WTC11 (cell line): ENCODE measurements at regions of chr2 and their contacts with region 1.

Region 1: DNA sequence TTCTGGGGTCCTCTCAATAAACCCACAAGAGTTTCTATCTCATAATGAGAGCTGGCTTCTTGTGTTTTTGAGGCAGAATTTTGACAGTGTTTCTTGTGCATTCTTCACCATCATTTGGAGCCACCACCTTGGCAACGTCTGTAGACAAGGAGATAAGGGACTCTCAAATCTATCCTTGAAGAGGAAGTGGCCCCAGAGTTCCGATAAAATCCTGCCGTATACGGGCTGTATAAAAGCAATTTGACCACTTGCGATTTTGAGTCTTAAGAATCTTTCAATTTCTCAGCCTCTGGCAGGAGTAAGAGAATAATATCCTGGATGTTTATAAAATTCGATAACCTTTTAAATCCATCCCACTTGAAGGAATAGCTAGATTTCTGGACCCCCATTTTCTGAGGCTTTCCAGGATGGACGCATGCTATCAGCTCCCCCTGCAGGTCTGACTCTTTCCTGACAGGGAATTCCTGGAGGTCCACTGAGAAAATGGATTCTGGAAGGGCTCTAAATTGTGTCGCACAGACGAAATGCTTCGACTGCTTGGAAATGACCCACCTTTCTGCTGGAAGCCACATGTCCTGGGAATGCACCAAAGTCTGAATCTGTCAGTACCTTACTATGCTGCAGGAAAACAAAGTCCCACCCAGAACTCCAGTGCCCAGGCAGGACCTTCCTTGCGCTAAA is 54.1 kb downstream of the E2F6 start:
- DNase-seq: peak; percentile 65
- ATAC-seq: peak; percentile 79
- H3K4me3 Mint-ChIP-seq: no peak overlapping the region
- H3K27ac Mint-ChIP-seq: no peak overlapping the region
- H3K4me1 Mint-ChIP-seq: no peaks in the 10 kb centered on the region
- H3K27me3 Mint-ChIP-seq: peaks cover 1% of the 10 kb centered on the region
- CTCF ChIP-seq: peak; percentile 49; the same call in 1 of the 2 replicates

Region 2: DNA sequence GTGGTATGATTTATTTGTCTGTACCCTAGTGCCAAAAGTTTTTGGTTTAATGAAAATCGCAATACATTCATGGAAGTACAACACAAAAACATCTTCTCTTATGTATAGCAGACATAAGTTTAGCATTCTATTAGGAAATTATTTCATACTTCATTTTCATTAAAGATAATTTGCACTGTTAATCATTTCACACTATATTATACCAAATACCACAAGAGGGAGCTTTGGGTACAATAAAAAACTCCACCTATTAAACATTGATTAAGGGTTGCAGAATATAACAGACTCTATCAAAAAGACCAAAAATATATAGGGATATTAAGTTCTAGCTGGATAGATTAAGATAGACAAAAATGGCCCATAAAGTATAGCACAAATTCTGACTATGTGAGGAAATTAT is 177.6 kb before region 1 on chr2:
- CTCF ChIA-PET with region 1: interaction called, 10 read pairs
- POLR2A ChIA-PET with region 1: no interaction called
- DNase-seq: no peak
- ATAC-seq: no peak
- H3K4me3 Mint-ChIP-seq: no peak overlapping the region
- H3K27ac Mint-ChIP-seq: no peak overlapping the region
- H3K4me1 Mint-ChIP-seq: no peaks in the 10 kb centered on the region
- H3K27me3 Mint-ChIP-seq: no peaks in the 10 kb centered on the region
- CTCF ChIP-seq: no peak

Region 3: DNA sequence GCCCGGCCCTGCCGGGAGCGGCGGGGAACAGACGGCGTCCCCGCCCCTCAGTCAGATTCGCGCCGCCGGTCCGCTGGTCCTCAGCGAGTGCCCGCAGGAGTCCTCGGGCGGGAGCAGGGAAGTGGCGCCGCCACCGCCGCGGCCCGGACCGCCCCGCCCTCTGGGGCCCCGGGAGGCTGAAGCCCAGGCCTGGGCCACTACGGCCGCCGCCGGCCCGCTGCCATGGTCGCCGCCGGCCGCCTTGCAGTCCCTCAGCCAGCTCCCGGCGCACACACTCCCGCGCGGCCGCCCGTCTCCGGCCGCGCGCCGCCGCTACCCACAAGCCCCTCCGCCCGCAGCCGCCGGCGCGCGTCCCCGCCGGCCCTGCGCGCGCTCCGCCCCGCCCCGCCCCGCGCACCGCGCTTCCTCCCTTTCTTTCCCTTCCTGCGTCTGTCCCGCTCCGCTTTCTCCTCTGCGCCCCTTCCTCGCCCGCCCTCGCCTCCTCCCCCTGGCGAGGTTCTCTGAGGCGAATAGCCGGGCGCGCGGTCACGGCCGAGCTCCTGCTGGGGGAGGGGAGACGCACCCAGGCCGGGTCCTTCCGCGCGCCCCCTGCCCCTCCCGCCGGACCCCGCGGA is 67.5 kb before region 1 on chr2 and contains the start of gene ROCK2:
- CTCF ChIA-PET with region 1: interaction called, 14 read pairs
- POLR2A ChIA-PET with region 1: no interaction called
- DNase-seq: peak; percentile 86
- ATAC-seq: peak; percentile 82
- H3K4me3 Mint-ChIP-seq: peak within 1 kb of the TSS; percentile 96
- H3K27ac Mint-ChIP-seq: peak within 1 kb of the TSS; percentile 97
- H3K4me1 Mint-ChIP-seq: peaks cover 35% of the 10 kb centered on the region
- H3K27me3 Mint-ChIP-seq: peaks cover 4% of the 10 kb centered on the region; the same call in 1 of the 2 replicates
- CTCF ChIP-seq: no peak
- total RNA-seq, gene ROCK2: 21.3 to 25.9 TPM (median 22.4 TPM) in 3 replicates